ENCODE measurements at regions of chr17 and their contacts with region 1.

Region 1: DNA sequence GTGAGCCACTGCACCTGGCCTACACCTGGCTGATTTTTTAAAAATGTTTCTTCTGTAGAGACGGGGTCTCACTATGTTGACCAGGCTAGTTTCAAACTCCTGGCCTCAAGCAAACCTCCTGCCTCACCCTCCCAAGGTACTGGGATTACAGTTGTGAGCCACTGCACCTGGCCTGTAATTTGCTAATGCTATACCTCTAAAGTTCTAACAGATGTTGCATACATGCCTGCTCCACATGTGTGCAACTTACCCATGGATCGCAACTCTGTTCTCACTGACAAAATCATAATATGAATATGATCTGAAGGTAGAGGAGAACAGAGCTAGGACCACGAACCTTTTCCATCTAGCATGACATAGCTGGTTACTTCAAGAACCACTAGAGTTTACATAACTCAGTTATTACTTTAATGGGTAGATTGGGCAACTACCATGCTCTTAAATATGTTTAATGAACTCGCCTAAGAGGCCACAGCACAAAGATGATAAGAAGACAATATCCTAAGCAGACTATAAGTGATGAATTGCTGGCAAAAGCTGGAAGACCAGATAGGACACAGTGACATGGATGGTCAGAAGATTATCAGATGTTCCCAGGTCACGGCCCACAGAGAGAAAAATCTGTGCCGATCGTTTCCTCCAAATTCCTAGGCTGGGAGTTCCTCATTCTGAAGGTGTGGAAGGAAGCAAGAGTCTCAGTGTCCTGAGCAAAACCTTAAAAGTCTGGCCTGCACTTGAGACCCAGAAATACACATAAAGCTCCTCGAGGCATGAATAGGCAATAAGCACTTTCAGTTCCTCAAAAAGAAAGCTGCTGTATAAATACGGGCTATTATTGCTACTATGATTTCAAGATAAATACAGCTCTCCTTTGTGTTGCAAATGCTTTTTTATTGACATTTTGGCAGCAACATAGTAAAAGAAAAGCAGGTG is 53.6 kb upstream of the ICAM2 start:
- DNase-seq: no peak
- H3K4me3 Mint-ChIP-seq: no peak overlapping the region
- H3K27ac Mint-ChIP-seq: peak overlapping the region; percentile 79
- H3K4me1 Mint-ChIP-seq: peaks cover 20% of the 10 kb centered on the region
- H3K27me3 Mint-ChIP-seq: no peaks in the 10 kb centered on the region
- CTCF ChIP-seq: no peak

Region 2: GRCh38 chr17:64091116-64091515 is 17.1 kb after region 1 on chr17:
- CTCF ChIA-PET with region 1: interaction called, 3 read pairs
- POLR2A ChIA-PET with region 1: interaction called, 30 read pairs
- intact Hi-C with region 1: no loop called
- DNase-seq: no peak
- H3K4me3 Mint-ChIP-seq: no peak overlapping the region
- H3K27ac Mint-ChIP-seq: peak overlapping the region; percentile 85
- H3K4me1 Mint-ChIP-seq: peaks cover 26% of the 10 kb centered on the region
- H3K27me3 Mint-ChIP-seq: no peaks in the 10 kb centered on the region
- CTCF ChIP-seq: no peak

Region 3: GRCh38 chr17:64152428-64153135 is 78.5 kb after region 1 on chr17:
- CTCF ChIA-PET with region 1: no interaction called
- POLR2A ChIA-PET with region 1: no interaction called
- intact Hi-C with region 1: no loop called
- DNase-seq: no peak
- H3K4me3 Mint-ChIP-seq: no peak overlapping the region
- H3K27ac Mint-ChIP-seq: peak overlapping the region; percentile 40
- H3K4me1 Mint-ChIP-seq: peaks cover 13% of the 10 kb centered on the region
- H3K27me3 Mint-ChIP-seq: no peaks in the 10 kb centered on the region
- CTCF ChIP-seq: no peak